ENCODE measurements at regions of chr15 and their contacts with region 1.

Region 1: DNA sequence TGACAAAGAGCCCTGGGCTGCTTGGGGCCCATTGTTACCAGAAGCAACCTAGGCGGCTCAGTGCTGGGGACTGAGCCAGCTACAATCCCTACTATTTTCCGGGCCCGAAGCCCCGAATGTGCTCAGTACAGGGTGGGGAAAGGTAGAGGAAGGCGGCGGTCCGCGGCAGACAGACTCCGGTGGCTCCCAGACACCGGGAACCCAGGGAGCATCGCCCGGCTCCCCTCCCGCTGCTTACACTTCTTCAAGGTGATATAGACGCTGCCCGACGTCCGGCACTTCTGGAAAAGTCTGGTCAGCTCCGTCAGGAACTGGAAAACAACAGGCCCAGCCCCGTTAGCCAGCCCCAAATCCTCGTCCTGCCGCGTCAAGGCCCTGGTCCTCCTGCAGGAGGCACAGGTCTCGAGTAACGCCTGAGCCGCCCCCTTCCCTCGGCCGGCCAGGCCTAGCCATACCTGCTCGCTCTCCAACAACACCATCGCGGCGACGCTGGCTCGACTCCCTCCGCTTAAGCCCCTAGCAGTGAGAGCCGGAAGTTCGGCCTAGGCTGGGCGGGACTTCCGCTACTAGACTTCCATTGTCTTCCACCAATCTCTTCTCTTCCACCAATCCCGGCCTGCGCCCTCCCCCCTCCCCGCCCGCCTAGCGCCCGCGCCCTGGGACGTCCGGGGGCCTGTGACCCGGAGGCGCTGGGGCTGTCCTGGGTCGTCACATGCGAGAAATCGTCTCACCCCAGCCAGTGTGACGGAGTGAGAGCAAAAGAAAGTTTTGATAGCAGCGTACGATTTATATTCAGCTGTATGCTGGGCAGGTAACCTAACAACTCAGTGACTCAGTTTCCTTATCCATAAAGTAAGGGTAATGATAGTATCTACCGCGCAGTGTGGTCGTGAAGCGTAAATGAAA is at the start of gene SRP14:
- DNase-seq: peak; percentile 95
- ATAC-seq: peak; percentile 96
- H3K4me3 Mint-ChIP-seq: peak within 1 kb of the TSS; percentile 97
- H3K27ac Mint-ChIP-seq: peak within 1 kb of the TSS; percentile 98
- H3K4me1 Mint-ChIP-seq: peaks cover 49% of the 10 kb centered on the region
- H3K27me3 Mint-ChIP-seq: no peaks in the 10 kb centered on the region
- total RNA-seq, gene SRP14: 124 to 157 TPM

Region 2: GRCh38 chr15:39920510-39921273 is 118.2 kb before region 1 on chr15:
- CTCF ChIA-PET with region 1: interaction called, 3 read pairs
- POLR2A ChIA-PET with region 1: no interaction called
- intact Hi-C with region 1: loop called in 1 of 2 experiments (anchors 5 kb)
- DNase-seq: peak; percentile 93
- ATAC-seq: peak; percentile 89
- H3K4me3 Mint-ChIP-seq: peak overlapping the region; percentile 73
- H3K27ac Mint-ChIP-seq: peak overlapping the region; percentile 73
- H3K4me1 Mint-ChIP-seq: peaks cover 29% of the 10 kb centered on the region
- H3K27me3 Mint-ChIP-seq: peaks cover 19% of the 10 kb centered on the region

Region 3: DNA sequence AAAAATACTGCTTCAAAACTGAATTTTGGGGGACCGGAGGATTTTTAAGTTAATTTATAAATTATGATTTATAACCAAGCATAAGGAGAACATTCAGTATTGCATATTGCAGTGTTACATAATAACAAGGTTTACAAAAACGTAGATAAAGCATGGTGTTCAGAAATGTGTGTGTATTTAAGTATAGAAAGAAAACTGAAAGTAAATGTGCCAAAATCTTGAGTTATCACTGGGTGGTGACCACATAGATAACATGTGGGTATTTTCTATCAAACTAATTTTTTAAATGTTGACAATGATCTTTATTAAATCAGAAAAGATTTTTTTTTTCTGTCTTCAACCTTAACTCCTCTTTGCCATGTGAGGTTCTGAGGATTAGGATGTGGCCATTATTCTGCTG is 72.4 kb before region 1 on chr15:
- CTCF ChIA-PET with region 1: no interaction called
- POLR2A ChIA-PET with region 1: no interaction called
- intact Hi-C with region 1: loop called in 1 of 2 experiments (anchors 1 kb)
- DNase-seq: no peak
- ATAC-seq: no peak
- H3K4me3 Mint-ChIP-seq: no peak overlapping the region
- H3K27ac Mint-ChIP-seq: no peak overlapping the region
- H3K4me1 Mint-ChIP-seq: peaks cover 42% of the 10 kb centered on the region
- H3K27me3 Mint-ChIP-seq: no peaks in the 10 kb centered on the region

Region 4: GRCh38 chr15:40160689-40161688 is 122.1 kb after region 1 on chr15 and contains the start of gene BUB1B:
- CTCF ChIA-PET with region 1: interaction called, 9 read pairs
- POLR2A ChIA-PET with region 1: interaction called, 5 read pairs
- intact Hi-C with region 1: loop called (anchors 1 to 2 kb)
- DNase-seq: peak; percentile 96
- ATAC-seq: peak; percentile 95
- H3K4me3 Mint-ChIP-seq: no peak within 1 kb of the TSS
- H3K27ac Mint-ChIP-seq: no peak within 1 kb of the TSS
- H3K4me1 Mint-ChIP-seq: peaks cover 8% of the 10 kb centered on the region
- H3K27me3 Mint-ChIP-seq: no peaks in the 10 kb centered on the region
- total RNA-seq, gene BUB1B: 95.3 to 99.5 TPM

Region 5: DNA sequence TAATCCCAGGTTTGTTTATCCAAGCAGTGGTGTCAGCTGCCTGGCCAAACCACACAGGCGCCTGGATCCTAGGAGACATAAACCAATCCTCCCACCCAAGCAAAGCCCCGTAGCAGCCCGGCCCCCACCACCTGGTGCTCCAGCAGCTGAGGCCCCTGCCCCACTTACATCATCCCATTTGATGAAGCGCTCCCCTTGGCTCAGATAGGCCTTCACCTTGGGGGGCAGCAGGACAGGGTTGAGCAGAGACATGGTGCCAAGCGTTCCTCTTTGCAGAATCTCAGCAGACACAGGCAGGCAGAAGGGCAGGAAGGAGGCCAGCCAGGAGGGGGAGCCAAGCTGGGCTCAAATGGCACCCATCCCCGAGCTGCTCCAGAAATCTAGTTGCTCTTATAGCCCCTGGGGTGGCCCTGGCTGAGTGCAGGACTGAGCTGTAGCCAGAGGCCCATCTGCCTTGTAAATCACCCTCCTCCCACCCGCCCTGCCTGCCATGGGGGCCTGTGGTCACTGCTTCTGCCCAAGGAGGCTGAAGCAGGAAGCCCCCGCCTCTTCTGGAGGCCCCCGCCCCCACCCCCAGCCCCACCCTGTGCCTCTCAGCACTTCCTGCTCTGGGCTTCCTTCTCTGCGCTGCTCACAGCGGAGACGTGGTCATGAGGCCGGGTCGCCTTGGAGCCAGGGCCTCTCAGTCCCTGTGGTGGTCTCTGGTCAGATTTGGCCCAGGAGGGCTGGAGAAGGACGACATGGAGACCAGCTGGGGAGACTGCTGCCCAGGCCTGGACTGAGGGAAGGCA is 268.7 kb after region 1 on chr15 and contains the start of gene PLCB2:
- CTCF ChIA-PET with region 1: interaction called, 3 read pairs
- POLR2A ChIA-PET with region 1: no interaction called
- intact Hi-C with region 1: loop called in 1 of 2 experiments (anchors 1 kb)
- DNase-seq: peak; percentile 83
- ATAC-seq: peak; percentile 79
- H3K4me3 Mint-ChIP-seq: peak within 1 kb of the TSS; percentile 91
- H3K27ac Mint-ChIP-seq: peak within 1 kb of the TSS; percentile 97
- H3K4me1 Mint-ChIP-seq: peaks cover 31% of the 10 kb centered on the region
- H3K27me3 Mint-ChIP-seq: no peaks in the 10 kb centered on the region
- total RNA-seq, gene PLCB2: 67.9 to 86.8 TPM

Measured in activated CD4-positive, alpha-beta T cell treated with anti-CD3 and anti-CD28 coated beads for 36 hours (primary cell).